Lower leg skin (tissue), 4 donors: ENCODE measurements at regions of chr2 and their contacts with region 1.

Region 1: GRCh38 chr2:43960921-43961320 is 34.9 kb downstream of the LRPPRC start:
- DNase-seq: no peak
- H3K4me3 ChIP-seq: no peak overlapping the region
- CTCF ChIP-seq: no peak
- POLR2A ChIP-seq: no peak

Region 2: GRCh38 chr2:43950383-43951008 is 10.4 kb before region 1 on chr2:
- intact Hi-C with region 1: loop called (anchors 1 kb)
- DNase-seq: no peak
- H3K4me3 ChIP-seq: no peak overlapping the region
- CTCF ChIP-seq: no peak
- POLR2A ChIP-seq: no peak